IMR-90 (cell line): ENCODE measurements at regions of chr4 and their contacts with region 1.

Region 1: GRCh38 chr4:28976369-28976768 is 1743.8 kb upstream of the PCDH7 start:
- DNase-seq: no peak
- ATAC-seq: no peak
- H3K4me3 ChIP-seq: no peak overlapping the region
- H3K27ac ChIP-seq: no peak overlapping the region
- H3K4me1 ChIP-seq: no peaks in the 10 kb centered on the region
- H3K27me3 ChIP-seq: no peaks in the 10 kb centered on the region
- CTCF ChIP-seq: no peak
- POLR2A ChIP-seq: no peak
- RAD21 ChIP-seq: no peak

Region 2: DNA sequence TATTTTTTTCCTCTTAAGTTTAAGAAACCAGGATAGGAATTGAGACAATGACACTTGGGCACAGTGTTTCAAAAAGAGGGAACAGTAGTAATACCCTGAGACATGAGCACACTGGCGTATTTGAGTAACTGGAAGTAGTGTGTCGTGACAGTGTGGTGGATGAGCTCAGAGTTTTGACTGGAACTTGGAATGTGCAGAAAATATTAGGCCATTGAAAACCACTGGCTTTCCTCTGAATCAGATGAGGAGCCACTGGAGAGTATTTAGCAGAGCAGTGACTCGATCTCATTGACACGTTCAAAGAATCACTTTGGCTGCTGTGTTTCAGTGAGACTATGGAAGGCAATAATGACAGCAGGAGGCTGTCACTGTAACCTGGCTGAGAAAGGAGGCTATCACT is 584.5 kb before region 1 on chr4:
- CTCF ChIA-PET with region 1: no interaction called
- POLR2A ChIA-PET with region 1: no interaction called
- dilution Hi-C with region 1: no loop called
- in situ Hi-C with region 1: no loop called
- intact Hi-C with region 1: no loop called
- DNase-seq: peak; percentile 40
- ATAC-seq: peak; percentile 61
- H3K4me3 ChIP-seq: no peak overlapping the region
- H3K27ac ChIP-seq: no peak overlapping the region
- H3K4me1 ChIP-seq: no peaks in the 10 kb centered on the region
- H3K27me3 ChIP-seq: no peaks in the 10 kb centered on the region
- CTCF ChIP-seq: no peak
- POLR2A ChIP-seq: no peak
- RAD21 ChIP-seq: no peak

Region 3: GRCh38 chr4:29046186-29046585 is 69.8 kb after region 1 on chr4:
- CTCF ChIA-PET with region 1: no interaction called
- POLR2A ChIA-PET with region 1: no interaction called
- dilution Hi-C with region 1: no loop called
- in situ Hi-C with region 1: no loop called
- intact Hi-C with region 1: loop called (anchors 5 kb)
- DNase-seq: peak; percentile 92
- ATAC-seq: peak; percentile 73
- H3K4me3 ChIP-seq: no peak overlapping the region
- H3K27ac ChIP-seq: peak overlapping the region; percentile 49; the same call in 1 of the 2 replicates
- H3K4me1 ChIP-seq: peaks cover 11% of the 10 kb centered on the region
- H3K27me3 ChIP-seq: no peaks in the 10 kb centered on the region
- CTCF ChIP-seq: no peak
- POLR2A ChIP-seq: no peak
- RAD21 ChIP-seq: no peak